Activated CD4-positive, alpha-beta memory T cell treated with anti-CD3 and anti-CD28 coated beads for 36 hours (primary cell): ENCODE measurements at regions of chr10 and their contacts with region 1.

Region 1: GRCh38 chr10:14588084-14588937 is 186.4 kb downstream of the FAM107B start:
- DNase-seq: peak; percentile 82
- H3K4me3 Mint-ChIP-seq: peak overlapping the region; percentile 52
- H3K27ac Mint-ChIP-seq: peak overlapping the region; percentile 98
- H3K4me1 Mint-ChIP-seq: peaks cover 90% of the 10 kb centered on the region
- H3K27me3 Mint-ChIP-seq: no peaks in the 10 kb centered on the region

Region 2: DNA sequence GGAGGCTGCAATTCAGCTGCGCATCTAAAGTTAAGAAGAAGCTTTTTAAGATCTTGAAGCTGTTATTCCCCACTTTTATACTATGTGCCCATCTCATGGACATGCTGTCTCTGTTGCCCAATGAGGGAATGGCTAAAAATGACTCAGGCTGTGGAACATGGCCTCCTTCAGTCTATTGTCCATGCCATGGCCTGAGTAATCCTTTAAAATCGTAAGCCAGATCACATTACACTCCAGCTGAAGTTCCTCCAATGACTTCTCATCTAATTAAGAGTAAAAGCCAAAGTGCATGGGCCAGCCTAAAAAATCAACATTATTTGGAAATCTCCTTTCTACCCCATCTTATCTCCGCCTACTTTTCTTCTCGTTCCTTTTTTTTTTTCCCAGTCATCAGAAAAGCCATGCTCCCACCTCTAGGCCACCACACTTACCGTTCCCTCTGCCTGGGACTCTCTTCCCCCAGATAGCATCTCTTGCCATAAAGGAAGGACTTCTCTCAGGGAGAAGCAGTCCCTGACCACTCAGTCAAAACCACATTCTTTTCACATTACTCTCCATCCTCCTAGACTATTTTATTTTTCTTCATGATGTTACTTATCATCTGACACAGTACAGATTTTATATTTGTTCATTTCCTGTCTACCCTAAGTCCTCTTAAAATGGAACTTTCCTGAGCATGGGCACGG is 664.1 kb before region 1 on chr10:
- CTCF ChIA-PET with region 1: no interaction called
- POLR2A ChIA-PET with region 1: no interaction called
- intact Hi-C with region 1: no loop called
- DNase-seq: no peak
- H3K4me3 Mint-ChIP-seq: no peak overlapping the region
- H3K27ac Mint-ChIP-seq: no peak overlapping the region
- H3K4me1 Mint-ChIP-seq: peaks cover 5% of the 10 kb centered on the region
- H3K27me3 Mint-ChIP-seq: peaks cover 1% of the 10 kb centered on the region

Region 3: DNA sequence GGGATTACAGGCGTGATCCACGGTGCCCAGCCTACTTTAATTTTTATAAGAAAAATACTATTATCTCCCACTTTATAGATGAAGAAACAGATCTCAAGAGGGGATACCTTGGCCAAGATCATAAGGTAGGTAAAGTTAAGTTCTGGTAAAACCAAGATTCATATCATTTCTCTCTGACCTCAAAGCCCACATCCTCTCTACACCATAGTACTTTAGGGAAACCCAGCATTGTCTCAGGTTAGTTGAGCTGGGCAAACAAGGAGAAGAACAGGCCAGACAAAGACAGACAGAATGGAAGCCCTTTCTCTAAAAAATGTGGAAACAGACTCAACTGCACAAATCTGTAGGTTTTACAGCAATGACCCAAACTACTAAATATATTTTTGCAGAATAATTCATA is 59.9 kb before region 1 on chr10:
- CTCF ChIA-PET with region 1: no interaction called
- POLR2A ChIA-PET with region 1: no interaction called
- intact Hi-C with region 1: loop called (anchors 2 kb)
- DNase-seq: no peak
- H3K4me3 Mint-ChIP-seq: peak overlapping the region; percentile 50
- H3K27ac Mint-ChIP-seq: peak overlapping the region; percentile 80
- H3K4me1 Mint-ChIP-seq: peaks cover 89% of the 10 kb centered on the region
- H3K27me3 Mint-ChIP-seq: no peaks in the 10 kb centered on the region

Region 4: DNA sequence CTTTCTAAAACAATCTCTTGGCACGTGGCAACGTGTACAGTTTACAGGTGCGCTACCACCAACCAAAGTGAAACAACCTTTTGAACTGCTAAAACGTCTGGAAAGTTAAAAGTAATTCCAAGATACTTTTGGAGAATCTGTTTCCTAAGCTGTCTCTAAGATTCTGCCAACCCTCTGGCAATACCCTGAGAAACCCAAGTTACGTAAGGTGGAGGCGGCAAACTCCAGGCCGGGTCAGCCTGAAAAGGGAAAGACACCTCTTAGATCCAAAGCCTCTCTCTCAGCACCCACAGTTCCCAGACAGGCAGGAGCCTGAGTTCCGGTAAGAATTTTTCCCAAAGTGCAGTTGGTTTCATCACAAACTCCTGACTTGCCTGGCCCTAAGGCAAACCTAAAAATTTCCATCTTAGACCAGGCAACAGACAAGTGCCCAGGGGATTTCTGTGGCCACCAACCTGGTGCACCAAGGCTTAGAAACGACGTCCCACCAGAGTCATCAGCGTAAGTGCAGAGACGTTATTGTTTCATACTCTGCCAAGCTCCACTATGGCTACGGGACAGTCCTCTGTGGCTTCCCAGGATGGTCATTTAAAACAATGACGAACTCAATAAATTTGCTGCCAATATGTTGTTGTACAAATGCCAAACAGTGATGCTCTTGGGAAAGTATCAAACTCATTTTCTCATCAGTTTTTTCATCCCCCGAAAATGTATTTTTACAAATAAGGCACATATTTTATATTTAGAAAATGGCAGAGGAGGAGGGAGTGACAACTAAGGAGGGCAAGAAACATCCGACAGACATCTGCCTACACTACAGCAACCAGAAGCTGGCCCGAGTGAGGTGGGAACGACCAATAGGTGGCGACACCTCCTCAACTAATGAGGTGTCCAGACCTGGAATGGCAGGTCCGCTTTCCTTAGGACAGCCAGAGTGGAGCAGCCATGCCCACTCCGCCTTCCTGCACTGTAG is 51.8 kb before region 1 on chr10:
- CTCF ChIA-PET with region 1: interaction called, 10 read pairs
- POLR2A ChIA-PET with region 1: interaction called, 3 read pairs
- intact Hi-C with region 1: no loop called
- DNase-seq: peak; percentile 67
- H3K4me3 Mint-ChIP-seq: no peak overlapping the region
- H3K27ac Mint-ChIP-seq: peak overlapping the region; percentile 19
- H3K4me1 Mint-ChIP-seq: peaks cover 83% of the 10 kb centered on the region
- H3K27me3 Mint-ChIP-seq: no peaks in the 10 kb centered on the region

Region 5: DNA sequence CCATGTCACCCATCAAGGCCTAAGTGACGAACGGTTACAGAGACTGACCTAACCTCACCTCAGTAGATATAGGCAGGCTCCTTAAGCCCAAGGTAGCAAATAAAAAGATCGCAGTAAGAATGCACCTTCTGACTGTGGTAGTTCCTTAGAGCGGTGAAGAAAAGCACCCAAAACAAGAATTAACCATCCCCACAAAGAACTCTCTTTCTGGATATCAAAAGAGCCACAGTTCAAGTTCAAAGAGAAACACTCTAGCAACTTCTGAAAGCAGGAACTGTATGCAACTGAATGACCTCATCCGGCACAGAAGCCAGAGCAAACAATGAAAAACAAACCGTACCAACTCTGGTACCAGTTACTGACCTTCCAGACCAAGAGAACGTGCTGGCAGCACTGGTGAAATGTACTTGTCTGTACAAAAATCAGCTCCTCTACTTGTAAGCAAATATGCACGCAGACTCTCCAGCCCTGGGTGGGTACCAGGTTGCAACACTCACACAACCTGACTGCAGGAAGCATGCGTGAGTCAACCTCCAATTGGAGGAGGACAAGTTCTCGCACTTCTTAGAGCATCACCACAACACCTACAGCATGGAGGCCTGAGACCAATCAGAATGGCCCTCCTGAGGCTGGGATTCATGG is 16.3 kb before region 1 on chr10:
- CTCF ChIA-PET with region 1: interaction called, 6 read pairs
- POLR2A ChIA-PET with region 1: interaction called, 6 read pairs
- intact Hi-C with region 1: loop called (anchors 1 kb)
- DNase-seq: peak; percentile 78
- H3K4me3 Mint-ChIP-seq: peak overlapping the region; percentile 69
- H3K27ac Mint-ChIP-seq: peak overlapping the region; percentile 90
- H3K4me1 Mint-ChIP-seq: peaks cover 90% of the 10 kb centered on the region
- H3K27me3 Mint-ChIP-seq: no peaks in the 10 kb centered on the region

Region 6: GRCh38 chr10:14611968-14612693 is 23.8 kb after region 1 on chr10:
- CTCF ChIA-PET with region 1: no interaction called
- POLR2A ChIA-PET with region 1: no interaction called
- intact Hi-C with region 1: no loop called
- DNase-seq: no peak
- H3K4me3 Mint-ChIP-seq: no peak overlapping the region
- H3K27ac Mint-ChIP-seq: no peak overlapping the region
- H3K4me1 Mint-ChIP-seq: peaks cover 28% of the 10 kb centered on the region
- H3K27me3 Mint-ChIP-seq: no peaks in the 10 kb centered on the region

Region 7: GRCh38 chr10:14801723-14802122 is 213.4 kb after region 1 on chr10:
- CTCF ChIA-PET with region 1: no interaction called
- POLR2A ChIA-PET with region 1: no interaction called
- intact Hi-C with region 1: no loop called
- DNase-seq: no peak
- H3K4me3 Mint-ChIP-seq: no peak overlapping the region
- H3K27ac Mint-ChIP-seq: no peak overlapping the region
- H3K4me1 Mint-ChIP-seq: no peaks in the 10 kb centered on the region
- H3K27me3 Mint-ChIP-seq: no peaks in the 10 kb centered on the region

Region 8: GRCh38 chr10:14878266-14879054 is 290.1 kb after region 1 on chr10 and contains the start of gene SUV39H2:
- CTCF ChIA-PET with region 1: no interaction called
- POLR2A ChIA-PET with region 1: no interaction called
- intact Hi-C with region 1: loop called (anchors 5 kb)
- DNase-seq: peak; percentile 96
- H3K4me3 Mint-ChIP-seq: peak within 1 kb of the TSS; percentile 94
- H3K27ac Mint-ChIP-seq: peak within 1 kb of the TSS; percentile 80
- H3K4me1 Mint-ChIP-seq: peaks cover 41% of the 10 kb centered on the region
- H3K27me3 Mint-ChIP-seq: no peaks in the 10 kb centered on the region
- total RNA-seq, gene SUV39H2: 38.7 to 39.8 TPM